Activated CD4-positive, alpha-beta memory T cell treated with anti-CD3 and anti-CD28 coated beads for 36 hours (primary cell): ENCODE measurements at regions of chr7 and their contacts with region 1.

Region 1: GRCh38 chr7:43582503-43583423 is at the start of gene STK17A:
- DNase-seq: peak; percentile 97
- H3K4me3 Mint-ChIP-seq: peak within 1 kb of the TSS; percentile 95
- H3K27ac Mint-ChIP-seq: peak within 1 kb of the TSS; percentile 98
- H3K4me1 Mint-ChIP-seq: peaks cover 20% of the 10 kb centered on the region
- H3K27me3 Mint-ChIP-seq: peaks cover 5% of the 10 kb centered on the region
- total RNA-seq, gene STK17A: 58.2 to 62.6 TPM

Region 2: GRCh38 chr7:43135129-43135528 is 447.6 kb before region 1 on chr7:
- CTCF ChIA-PET with region 1: no interaction called
- POLR2A ChIA-PET with region 1: no interaction called
- intact Hi-C with region 1: no loop called
- DNase-seq: no peak
- H3K4me3 Mint-ChIP-seq: no peak overlapping the region
- H3K27ac Mint-ChIP-seq: no peak overlapping the region
- H3K4me1 Mint-ChIP-seq: no peaks in the 10 kb centered on the region
- H3K27me3 Mint-ChIP-seq: peaks cover 11% of the 10 kb centered on the region

Region 3: GRCh38 chr7:43612599-43613589 is 30.1 kb after region 1 on chr7:
- CTCF ChIA-PET with region 1: interaction called, 112 read pairs
- POLR2A ChIA-PET with region 1: interaction called, 15 read pairs
- intact Hi-C with region 1: loop called (anchors 1 kb)
- DNase-seq: peak; percentile 33
- H3K4me3 Mint-ChIP-seq: peak overlapping the region; percentile 43
- H3K27ac Mint-ChIP-seq: peak overlapping the region; percentile 83
- H3K4me1 Mint-ChIP-seq: peaks cover 58% of the 10 kb centered on the region
- H3K27me3 Mint-ChIP-seq: no peaks in the 10 kb centered on the region

Region 4: DNA sequence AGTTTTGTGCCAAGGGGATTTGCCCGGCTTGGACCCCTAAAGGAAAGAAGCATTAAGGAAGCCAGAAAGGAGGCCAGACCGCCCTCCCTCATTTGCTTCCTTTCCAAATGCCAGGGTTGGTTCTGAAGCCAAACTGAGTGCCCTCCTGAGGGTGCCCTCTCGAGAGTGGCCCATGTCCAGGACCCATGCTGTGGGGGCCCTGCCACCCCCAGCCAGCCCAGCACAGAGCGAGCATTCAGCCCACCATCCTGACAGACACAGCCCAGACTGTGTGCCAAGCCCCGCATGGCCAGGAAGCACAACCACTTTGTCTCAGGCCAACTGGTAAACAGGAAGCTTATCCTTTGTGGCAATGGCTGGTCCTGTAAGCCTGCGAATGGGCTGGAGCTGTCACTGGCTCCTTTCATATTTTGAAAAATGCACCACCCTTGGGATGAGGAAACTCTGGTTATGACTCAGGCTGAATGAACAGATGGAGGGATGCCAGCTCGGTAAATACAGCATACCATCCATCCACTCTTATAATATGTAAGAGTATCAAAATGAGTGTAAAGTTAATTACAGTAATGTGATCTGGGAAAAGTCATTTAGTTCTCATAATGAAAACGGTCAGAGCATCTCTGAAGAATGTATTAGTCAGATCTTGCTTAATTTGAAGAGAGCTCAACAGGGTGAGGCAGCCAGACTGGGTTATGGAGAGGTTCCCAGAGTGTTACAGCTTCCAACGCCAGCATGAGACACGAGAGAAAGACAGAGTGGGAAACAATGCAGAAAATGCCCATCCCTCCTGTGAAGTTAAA is 65.1 kb after region 1 on chr7:
- CTCF ChIA-PET with region 1: interaction called, 130 read pairs
- POLR2A ChIA-PET with region 1: interaction called, 90 read pairs
- intact Hi-C with region 1: loop called (anchors 1 kb)
- DNase-seq: peak; percentile 80
- H3K4me3 Mint-ChIP-seq: peak overlapping the region; percentile 80
- H3K27ac Mint-ChIP-seq: peak overlapping the region; percentile 99
- H3K4me1 Mint-ChIP-seq: peaks cover 93% of the 10 kb centered on the region
- H3K27me3 Mint-ChIP-seq: no peaks in the 10 kb centered on the region

Region 5: DNA sequence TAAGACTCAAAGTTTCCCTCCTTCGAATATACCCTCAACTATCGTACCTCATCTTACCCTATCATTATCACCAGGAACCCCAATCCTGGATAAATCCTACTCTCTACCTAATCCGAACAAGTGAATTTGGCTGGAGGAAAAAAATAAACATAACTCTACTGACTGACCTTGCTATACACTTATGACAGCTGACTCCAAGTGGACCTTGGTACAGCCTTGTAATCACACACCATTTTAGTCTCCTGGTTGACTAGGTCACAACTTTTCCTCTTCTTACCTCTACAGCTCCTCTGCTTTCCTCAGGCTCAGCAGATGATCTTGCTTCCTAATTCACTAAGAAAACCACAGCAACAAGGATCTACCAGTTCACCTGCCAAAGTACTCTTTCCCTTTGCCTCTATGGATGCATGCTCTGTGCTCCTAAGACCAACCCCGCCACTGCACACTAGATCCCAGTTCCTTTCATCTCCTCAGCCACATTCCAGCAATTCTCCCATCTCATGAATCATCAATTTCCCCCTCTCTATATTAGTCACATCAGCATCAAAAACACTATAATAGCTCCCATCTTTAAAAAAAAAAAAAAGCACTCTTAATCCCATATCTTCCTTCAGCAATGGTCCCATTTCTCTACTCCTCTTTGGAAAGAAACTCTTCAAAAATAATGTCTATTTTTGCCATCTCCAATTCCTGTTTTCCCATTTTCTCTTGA is 111.1 kb after region 1 on chr7:
- CTCF ChIA-PET with region 1: interaction called, 548 read pairs
- POLR2A ChIA-PET with region 1: interaction called, 9 read pairs
- intact Hi-C with region 1: no loop called
- DNase-seq: no peak
- H3K4me3 Mint-ChIP-seq: no peak overlapping the region
- H3K27ac Mint-ChIP-seq: no peak overlapping the region
- H3K4me1 Mint-ChIP-seq: peaks cover 31% of the 10 kb centered on the region
- H3K27me3 Mint-ChIP-seq: no peaks in the 10 kb centered on the region

Region 6: DNA sequence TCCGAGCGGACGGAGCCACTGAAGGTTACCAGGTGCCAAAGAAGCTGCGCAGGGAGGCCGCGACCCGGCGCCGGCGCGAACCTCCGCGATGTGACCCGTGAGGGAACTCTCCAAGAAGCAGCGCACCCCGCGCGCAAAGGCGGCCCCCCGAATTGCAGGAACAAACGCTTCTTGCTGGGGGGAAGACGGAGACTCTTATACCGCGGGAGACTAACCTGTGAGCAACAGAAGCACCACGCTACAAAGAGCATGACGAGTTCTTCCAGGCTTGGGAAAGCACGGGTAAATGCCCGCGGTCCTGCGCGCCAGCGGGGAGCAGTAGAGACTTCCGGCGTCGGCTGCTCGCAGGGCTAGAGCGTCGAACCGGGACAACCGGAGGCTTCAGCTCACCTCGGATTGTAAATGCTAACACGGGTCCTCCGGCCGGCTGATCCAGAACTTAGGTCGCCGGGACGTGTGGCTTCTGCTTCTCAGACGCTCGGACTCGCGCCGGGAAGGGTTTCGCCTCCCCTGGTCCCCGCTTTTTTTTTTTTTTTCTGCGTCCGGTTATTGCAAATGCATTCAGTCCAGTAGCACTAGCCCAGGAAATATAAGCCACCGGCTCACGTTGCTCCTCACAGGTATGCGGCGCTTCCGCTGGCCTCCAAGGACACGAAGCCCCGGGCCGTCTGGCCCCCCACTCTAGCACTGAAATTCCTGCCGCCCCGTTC is 146.6 kb after region 1 on chr7 and contains the start of gene COA1:
- CTCF ChIA-PET with region 1: interaction called, 56 read pairs
- POLR2A ChIA-PET with region 1: interaction called, 5 read pairs
- intact Hi-C with region 1: loop called (anchors 1 kb)
- DNase-seq: peak; percentile 89
- H3K4me3 Mint-ChIP-seq: peak within 1 kb of the TSS; percentile 94
- H3K27ac Mint-ChIP-seq: peak within 1 kb of the TSS; percentile 79
- H3K4me1 Mint-ChIP-seq: peaks cover 32% of the 10 kb centered on the region
- H3K27me3 Mint-ChIP-seq: no peaks in the 10 kb centered on the region
- total RNA-seq, gene COA1: 78.9 to 79.6 TPM

Region 7: GRCh38 chr7:43799589-43799988 is 216.8 kb after region 1 on chr7:
- CTCF ChIA-PET with region 1: interaction called, 24 read pairs
- POLR2A ChIA-PET with region 1: no interaction called
- intact Hi-C with region 1: no loop called
- DNase-seq: no peak
- H3K4me3 Mint-ChIP-seq: no peak overlapping the region
- H3K27ac Mint-ChIP-seq: no peak overlapping the region
- H3K4me1 Mint-ChIP-seq: no peaks in the 10 kb centered on the region
- H3K27me3 Mint-ChIP-seq: no peaks in the 10 kb centered on the region